Activated naive CD4-positive, alpha-beta T cell treated with anti-CD3 and anti-CD28 coated beads for 36 hours (primary cell): ENCODE measurements at regions of chr10 and their contacts with region 1.

Region 1: GRCh38 chr10:451021-451471 is 238.4 kb downstream of the DIP2C start:
- DNase-seq: peak; percentile 80
- H3K4me3 Mint-ChIP-seq: peak overlapping the region; percentile 74
- H3K27ac Mint-ChIP-seq: peak overlapping the region; percentile 64
- H3K4me1 Mint-ChIP-seq: peaks cover 59% of the 10 kb centered on the region
- H3K27me3 Mint-ChIP-seq: no peaks in the 10 kb centered on the region

Region 2: GRCh38 chr10:239109-239508 is 211.9 kb before region 1 on chr10:
- CTCF ChIA-PET with region 1: no interaction called
- intact Hi-C with region 1: no loop called
- DNase-seq: no peak
- H3K4me3 Mint-ChIP-seq: no peak overlapping the region
- H3K27ac Mint-ChIP-seq: no peak overlapping the region
- H3K4me1 Mint-ChIP-seq: no peaks in the 10 kb centered on the region
- H3K27me3 Mint-ChIP-seq: no peaks in the 10 kb centered on the region

Region 3: DNA sequence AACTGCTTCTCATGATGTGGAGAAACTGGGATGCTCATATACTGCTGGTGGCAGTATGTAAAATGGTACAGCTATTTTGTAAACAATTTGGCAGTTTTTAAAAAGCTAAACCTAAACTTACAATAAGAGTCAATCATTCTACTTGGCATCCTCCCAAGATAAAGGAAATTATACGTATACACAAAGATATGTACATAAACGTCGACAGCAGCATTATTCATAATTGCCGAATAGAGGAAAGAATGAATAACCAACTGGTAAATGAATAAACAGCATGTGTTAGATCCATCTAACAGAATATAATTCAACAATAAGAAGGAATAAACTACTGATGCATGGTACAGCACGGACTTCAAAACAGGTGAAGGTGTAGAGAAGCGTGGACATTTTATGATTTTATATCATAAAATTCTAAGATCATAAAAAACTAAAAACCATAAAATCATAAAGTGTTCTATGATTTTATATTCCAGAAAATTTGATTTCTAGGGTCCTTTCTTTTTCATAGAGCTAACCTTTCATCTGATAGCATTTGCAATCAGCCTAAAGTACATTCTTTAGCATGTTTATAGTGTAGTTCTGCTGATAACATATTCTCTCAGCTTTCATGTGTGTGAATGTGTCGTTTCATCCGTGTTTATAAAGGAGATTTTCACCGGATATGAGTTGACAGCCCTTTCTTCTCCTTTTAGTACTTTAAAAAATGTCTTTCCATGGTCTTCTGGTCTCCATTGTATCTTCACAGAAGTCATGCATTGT is 23.1 kb before region 1 on chr10:
- CTCF ChIA-PET with region 1: no interaction called
- intact Hi-C with region 1: no loop called
- DNase-seq: no peak
- H3K4me3 Mint-ChIP-seq: no peak overlapping the region
- H3K27ac Mint-ChIP-seq: no peak overlapping the region
- H3K4me1 Mint-ChIP-seq: peaks cover 9% of the 10 kb centered on the region
- H3K27me3 Mint-ChIP-seq: peaks cover 1% of the 10 kb centered on the region

Region 4: DNA sequence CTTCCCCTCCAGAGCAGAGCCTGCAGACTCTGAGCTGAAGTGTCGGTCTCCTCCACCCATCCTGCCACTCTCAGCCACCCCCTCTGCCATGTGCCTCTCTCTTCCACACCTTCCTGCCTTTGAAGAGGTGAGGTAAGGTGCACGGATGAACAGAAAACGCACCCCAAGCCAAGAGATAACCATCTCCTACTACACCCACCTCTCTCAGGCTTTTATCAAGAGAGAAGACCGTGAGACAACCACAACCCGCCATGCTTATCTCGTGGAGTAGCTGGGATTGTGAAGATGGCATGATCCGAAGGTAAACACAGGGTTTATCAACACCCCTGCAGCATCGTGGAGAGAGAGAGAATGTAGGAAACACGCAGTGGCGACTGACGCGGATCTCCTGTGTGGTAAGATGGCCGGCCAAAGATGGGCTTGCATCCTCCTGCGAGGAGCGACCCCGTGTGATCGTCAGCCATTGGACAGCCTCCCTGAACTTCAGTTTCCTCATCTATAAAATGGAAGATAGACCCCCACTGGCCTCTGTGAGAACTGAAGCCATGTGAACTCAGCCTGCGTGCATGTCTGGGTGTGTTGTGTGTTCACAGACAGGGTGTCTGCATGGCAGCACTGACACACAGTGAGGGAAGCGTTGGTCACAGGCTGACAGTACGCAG is 19.4 kb after region 1 on chr10:
- CTCF ChIA-PET with region 1: no interaction called
- intact Hi-C with region 1: loop called (anchors 2 kb)
- DNase-seq: peak; percentile 68
- H3K4me3 Mint-ChIP-seq: peak overlapping the region; percentile 58
- H3K27ac Mint-ChIP-seq: peak overlapping the region; percentile 10
- H3K4me1 Mint-ChIP-seq: peaks cover 22% of the 10 kb centered on the region
- H3K27me3 Mint-ChIP-seq: no peaks in the 10 kb centered on the region

Region 5: DNA sequence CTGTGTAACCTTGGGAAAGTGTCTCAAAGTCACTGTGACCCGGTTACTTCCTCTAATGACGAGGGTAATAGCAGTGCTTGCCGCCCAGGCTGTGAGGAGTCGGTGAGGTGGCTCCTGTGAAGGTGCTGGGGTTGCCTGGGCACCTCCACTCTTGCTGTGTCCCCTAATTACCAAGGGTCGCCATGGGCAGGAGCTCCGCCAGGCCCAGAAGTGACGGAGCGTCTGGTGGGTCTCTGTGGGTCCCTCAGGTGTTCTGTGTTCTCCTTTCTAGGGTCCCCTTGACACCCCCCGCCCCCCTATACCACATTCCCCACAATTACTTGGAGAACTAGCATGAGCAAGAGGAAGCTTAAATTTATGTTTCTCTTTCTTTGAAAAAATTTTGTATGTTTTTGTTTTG is 766.6 kb after region 1 on chr10:
- CTCF ChIA-PET with region 1: no interaction called
- intact Hi-C with region 1: no loop called
- DNase-seq: no peak
- H3K4me3 Mint-ChIP-seq: no peak overlapping the region
- H3K27ac Mint-ChIP-seq: no peak overlapping the region
- H3K4me1 Mint-ChIP-seq: no peaks in the 10 kb centered on the region
- H3K27me3 Mint-ChIP-seq: no peaks in the 10 kb centered on the region